CD4-positive, alpha-beta T cell (primary cell): ENCODE measurements at regions of chr20 and their contacts with region 1.

Region 1: DNA sequence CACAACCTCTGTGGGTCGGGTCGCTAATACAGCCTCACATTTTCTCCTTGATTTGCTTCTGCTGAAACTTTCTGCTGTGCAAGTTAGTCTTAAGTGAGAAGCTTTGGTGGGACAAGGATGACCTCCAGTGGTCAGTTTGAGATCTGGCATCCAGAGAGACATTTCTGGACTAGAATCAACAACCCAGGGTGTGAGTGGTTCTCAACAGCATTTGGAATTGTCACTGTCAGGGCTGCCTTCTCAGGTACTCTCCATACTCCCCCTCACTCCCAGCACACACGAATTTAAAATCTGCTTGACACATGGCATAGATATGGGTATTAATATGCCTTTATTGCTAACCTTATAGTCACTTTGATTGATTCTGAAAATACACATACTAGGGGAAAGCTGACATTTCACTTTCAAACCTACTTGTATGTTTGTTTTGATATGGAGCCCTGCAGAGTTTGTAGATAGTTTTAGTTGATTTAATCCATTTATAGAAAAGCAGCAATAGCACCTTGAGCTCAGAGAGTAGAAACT is 13.2 kb downstream of the OTOR start:
- DNase-seq: peak; percentile 8 to 78 (median 31)
- ATAC-seq: peak; percentile 62
- H3K4me3 ChIP-seq: no peak overlapping the region
- H3K4me3 Mint-ChIP-seq: no peak overlapping the region
- H3K27ac ChIP-seq: no peak overlapping the region
- H3K27ac Mint-ChIP-seq: no peak overlapping the region
- H3K4me1 ChIP-seq: no peaks in the 10 kb centered on the region
- H3K4me1 Mint-ChIP-seq: no peaks in the 10 kb centered on the region
- H3K27me3 ChIP-seq: peaks cover 9% of the 10 kb centered on the region in 2 experiments
- H3K27me3 Mint-ChIP-seq: peaks cover 29% of the 10 kb centered on the region
- CTCF ChIP-seq: peak; percentile 80

Region 2: GRCh38 chr20:15708984-15709598 is 1052.3 kb before region 1 on chr20:
- CTCF ChIA-PET with region 1: no interaction called
- POLR2A ChIA-PET with region 1: no interaction called
- intact Hi-C with region 1: loop called in 1 of 2 experiments (anchors 5 kb)
- DNase-seq: peak in 8 of 14 experiments; percentile 0 to 36 (median 4)
- ATAC-seq: no peak
- H3K4me3 ChIP-seq: no peak overlapping the region
- H3K4me3 Mint-ChIP-seq: no peak overlapping the region
- H3K27ac ChIP-seq: no peak overlapping the region
- H3K27ac Mint-ChIP-seq: no peak overlapping the region
- H3K4me1 ChIP-seq: no peaks in the 10 kb centered on the region
- H3K4me1 Mint-ChIP-seq: no peaks in the 10 kb centered on the region
- H3K27me3 ChIP-seq: no peaks in the 10 kb centered on the region
- H3K27me3 Mint-ChIP-seq: no peaks in the 10 kb centered on the region
- CTCF ChIP-seq: no peak

Region 3: GRCh38 chr20:16517946-16518783 is 243.2 kb before region 1 on chr20:
- CTCF ChIA-PET with region 1: interaction called, 3 read pairs
- POLR2A ChIA-PET with region 1: no interaction called
- intact Hi-C with region 1: loop called (anchors 1 kb)
- DNase-seq: peak in 5 of 14 experiments; percentile 3 to 37 (median 31)
- ATAC-seq: no peak
- H3K4me3 ChIP-seq: no peak overlapping the region
- H3K4me3 Mint-ChIP-seq: no peak overlapping the region
- H3K27ac ChIP-seq: no peak overlapping the region
- H3K27ac Mint-ChIP-seq: no peak overlapping the region
- H3K4me1 ChIP-seq: no peaks in the 10 kb centered on the region
- H3K4me1 Mint-ChIP-seq: peaks cover 5% of the 10 kb centered on the region
- H3K27me3 ChIP-seq: no peaks in the 10 kb centered on the region
- H3K27me3 Mint-ChIP-seq: no peaks in the 10 kb centered on the region
- CTCF ChIP-seq: peak; percentile 55

Region 4: GRCh38 chr20:16639027-16639941 is 122.1 kb before region 1 on chr20:
- CTCF ChIA-PET with region 1: no interaction called
- POLR2A ChIA-PET with region 1: no interaction called
- intact Hi-C with region 1: no loop called
- DNase-seq: no peak
- ATAC-seq: no peak
- H3K4me3 ChIP-seq: no peak overlapping the region
- H3K4me3 Mint-ChIP-seq: no peak overlapping the region
- H3K27ac ChIP-seq: no peak overlapping the region
- H3K27ac Mint-ChIP-seq: no peak overlapping the region
- H3K4me1 ChIP-seq: no peaks in the 10 kb centered on the region
- H3K4me1 Mint-ChIP-seq: no peaks in the 10 kb centered on the region
- H3K27me3 ChIP-seq: peaks cover 0 to 6% of the 10 kb centered on the region in 2 experiments
- H3K27me3 Mint-ChIP-seq: peaks cover 25% of the 10 kb centered on the region
- CTCF ChIP-seq: no peak

Region 5: DNA sequence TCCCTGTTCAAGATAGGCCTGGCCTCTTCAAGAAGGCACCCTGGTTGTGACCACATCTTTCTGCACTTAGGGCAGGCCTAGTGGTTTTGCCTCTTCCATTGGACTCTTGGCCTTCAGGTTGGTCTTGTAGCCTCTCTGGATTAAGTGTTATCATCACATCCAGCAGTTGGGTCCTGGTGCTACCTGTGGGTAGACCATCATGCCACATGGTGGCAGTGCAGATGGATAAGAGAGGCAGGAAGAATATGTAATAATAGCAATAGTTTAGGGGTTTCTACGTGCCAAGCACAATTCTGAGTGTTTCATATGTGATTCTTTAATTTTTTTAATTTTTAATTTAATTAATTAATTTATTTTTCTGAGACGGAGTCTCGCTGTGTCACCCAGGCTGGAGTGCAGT is 60.1 kb before region 1 on chr20:
- CTCF ChIA-PET with region 1: interaction called, 6 read pairs
- POLR2A ChIA-PET with region 1: no interaction called
- intact Hi-C with region 1: loop called (anchors 1 kb)
- DNase-seq: peak in 11 of 14 experiments; percentile 2 to 64 (median 20)
- ATAC-seq: peak; percentile 52
- H3K4me3 ChIP-seq: no peak overlapping the region
- H3K4me3 Mint-ChIP-seq: no peak overlapping the region
- H3K27ac ChIP-seq: no peak overlapping the region
- H3K27ac Mint-ChIP-seq: no peak overlapping the region
- H3K4me1 ChIP-seq: no peaks in the 10 kb centered on the region
- H3K4me1 Mint-ChIP-seq: peaks cover under 1% of the 10 kb centered on the region
- H3K27me3 ChIP-seq: no peaks in the 10 kb centered on the region
- H3K27me3 Mint-ChIP-seq: peaks cover 19% of the 10 kb centered on the region
- CTCF ChIP-seq: peak; percentile 41

Region 6: GRCh38 chr20:16777126-16777525 is 15.8 kb after region 1 on chr20:
- CTCF ChIA-PET with region 1: no interaction called
- POLR2A ChIA-PET with region 1: no interaction called
- intact Hi-C with region 1: no loop called
- DNase-seq: no peak
- ATAC-seq: no peak
- H3K4me3 ChIP-seq: no peak overlapping the region
- H3K4me3 Mint-ChIP-seq: no peak overlapping the region
- H3K27ac ChIP-seq: no peak overlapping the region
- H3K27ac Mint-ChIP-seq: no peak overlapping the region
- H3K4me1 ChIP-seq: no peaks in the 10 kb centered on the region
- H3K4me1 Mint-ChIP-seq: no peaks in the 10 kb centered on the region
- H3K27me3 ChIP-seq: peaks cover 6% of the 10 kb centered on the region in 2 experiments
- H3K27me3 Mint-ChIP-seq: peaks cover 15% of the 10 kb centered on the region
- CTCF ChIP-seq: no peak